Activated CD4-positive, alpha-beta T cell treated with anti-CD3 and anti-CD28 coated beads for 36 hours (primary cell): ENCODE measurements at regions of chr9 and their contacts with region 1.

Region 1: GRCh38 chr9:100472788-100473275 is at the start of gene TMEFF1:
- DNase-seq: peak; percentile 81
- ATAC-seq: peak; percentile 87
- H3K4me3 Mint-ChIP-seq: peak within 1 kb of the TSS; percentile 52
- H3K27ac Mint-ChIP-seq: no peak within 1 kb of the TSS
- H3K4me1 Mint-ChIP-seq: peaks cover 8% of the 10 kb centered on the region
- H3K27me3 Mint-ChIP-seq: peaks cover 29% of the 10 kb centered on the region
- total RNA-seq, gene TMEFF1: 0.27 TPM in 1 of 2 experiments, not detected in the other

Region 2: DNA sequence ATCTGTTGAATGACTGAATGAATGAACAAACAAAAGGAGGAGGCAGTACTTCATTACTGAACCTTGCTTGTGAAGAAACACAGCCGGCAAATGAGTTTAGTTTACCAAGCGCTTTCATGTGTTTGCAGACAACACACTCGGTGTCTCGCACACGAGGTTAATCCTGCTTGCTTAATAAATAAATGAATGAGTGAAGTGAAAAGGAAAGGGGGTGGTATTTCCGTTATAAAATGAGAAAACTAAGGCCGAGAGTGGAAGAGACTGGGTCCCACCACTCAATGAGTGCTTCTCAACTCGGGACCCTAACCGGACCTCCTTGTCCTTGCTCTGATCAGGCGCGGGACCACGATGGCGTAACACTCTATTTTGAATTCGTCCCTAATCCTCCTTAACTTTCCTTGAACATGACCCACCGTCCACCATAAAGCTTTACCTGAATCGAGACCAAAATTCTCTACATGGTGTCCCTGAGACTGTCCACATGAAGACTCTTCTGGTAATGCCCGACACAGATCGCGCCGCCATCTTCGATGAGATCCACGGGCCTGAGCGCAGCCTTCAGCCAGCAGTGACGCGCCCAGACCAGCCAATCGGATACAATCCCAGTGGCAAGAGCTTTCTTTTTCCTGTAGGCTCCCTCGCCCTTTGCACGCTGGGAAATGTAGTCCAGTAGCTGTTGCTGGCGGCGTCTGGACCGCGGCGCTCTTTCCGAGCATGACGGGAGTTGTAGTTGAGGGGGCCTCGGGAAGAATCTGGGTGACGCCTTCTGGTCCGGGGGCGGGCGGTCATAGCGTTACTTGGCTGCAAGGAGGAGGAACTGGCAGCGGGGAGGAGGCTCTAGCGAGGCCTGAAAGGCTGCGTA is 925.5 kb after region 1 on chr9 and contains the starts of genes MRPL50 and ZNF189:
- CTCF ChIA-PET with region 1: no interaction called
- POLR2A ChIA-PET with region 1: no interaction called
- intact Hi-C with region 1: loop called in 1 of 2 experiments (anchors 10 kb)
- DNase-seq: peak; percentile 98
- ATAC-seq: peak; percentile 97
- H3K4me3 Mint-ChIP-seq: peak within 1 kb of the TSS; percentile 94
- H3K27ac Mint-ChIP-seq: peak within 1 kb of the TSS; percentile 100
- H3K4me1 Mint-ChIP-seq: peaks cover 67% of the 10 kb centered on the region
- H3K27me3 Mint-ChIP-seq: no peaks in the 10 kb centered on the region
- total RNA-seq, gene MRPL50: 15.5 to 17.0 TPM
- total RNA-seq, gene ZNF189: 10.2 to 13.1 TPM